GM12878 (cell line): ENCODE measurements at regions of chr10 and their contacts with region 1.

Region 1: GRCh38 chr10:79249186-79250121 is 97.8 kb upstream of the PPIF start:
- DNase-seq: peak; percentile 74
- ATAC-seq: peak; percentile 54
- H3K4me3 ChIP-seq: peak overlapping the region; percentile 80
- H3K27ac ChIP-seq: peak overlapping the region; percentile 92
- H3K4me1 ChIP-seq: peaks cover 91% of the 10 kb centered on the region
- H3K27me3 ChIP-seq: no peaks in the 10 kb centered on the region
- CTCF ChIP-seq: no peak
- EP300 ChIP-seq: no peak
- POLR2A ChIP-seq: peak; percentile 62
- RAD21 ChIP-seq: no peak

Region 2: DNA sequence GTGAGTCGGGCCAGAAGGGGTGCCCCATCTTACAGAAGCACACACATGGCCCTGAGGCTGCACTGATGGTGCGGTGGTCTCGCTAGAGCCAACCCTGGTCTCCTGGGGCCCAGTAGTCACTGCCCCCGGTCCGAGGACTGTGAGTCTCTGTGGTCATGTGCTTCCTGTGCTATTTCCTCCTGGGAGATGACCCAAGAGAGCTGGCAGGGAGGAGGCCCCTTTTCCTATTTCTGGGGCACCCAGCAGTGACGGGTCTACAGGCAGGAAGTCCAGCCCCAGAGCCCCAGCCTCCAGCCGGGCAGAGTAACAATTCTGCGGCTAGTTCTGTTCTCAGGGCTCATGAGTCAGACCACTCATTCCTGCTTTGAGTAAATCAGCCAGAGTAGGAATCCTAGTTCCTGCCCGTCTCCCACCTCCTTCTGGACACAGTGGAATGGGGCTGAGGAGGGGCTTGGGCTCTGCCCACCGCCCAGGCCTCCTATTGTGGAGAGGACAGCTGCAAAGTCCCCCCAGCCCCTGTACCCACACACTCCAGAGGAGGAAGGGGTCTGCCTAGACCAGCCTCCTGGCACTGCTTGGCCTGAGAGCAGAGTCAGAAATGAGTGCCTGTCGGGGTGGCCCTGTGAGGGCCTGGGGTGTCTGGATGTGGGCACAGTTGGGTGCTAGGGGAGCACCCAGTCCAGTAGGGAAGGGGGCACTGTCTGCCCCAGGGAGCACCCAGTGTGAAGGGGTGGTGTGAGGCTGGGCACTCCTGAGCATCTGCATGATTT is 17.3 kb after region 1 on chr10:
- CTCF ChIA-PET with region 1: interaction called, 42 read pairs
- POLR2A ChIA-PET with region 1: interaction called, 6 read pairs
- RAD21 ChIA-PET with region 1: interaction called, 48 read pairs
- SMC1A ChIA-PET with region 1: interaction called, 114 read pairs
- in situ Hi-C with region 1: no loop called
- intact Hi-C with region 1: loop called (anchors 1 kb)
- DNase-seq: peak; percentile 81
- ATAC-seq: peak; percentile 89
- H3K4me3 ChIP-seq: peak overlapping the region; percentile 19; the same call in 1 of the 2 replicates
- H3K27ac ChIP-seq: peak overlapping the region; percentile 91
- H3K4me1 ChIP-seq: peaks cover 65% of the 10 kb centered on the region
- H3K27me3 ChIP-seq: no peaks in the 10 kb centered on the region
- CTCF ChIP-seq: no peak
- EP300 ChIP-seq: peak; percentile 62 to 91; a peak in 3 of 4 replicates
- POLR2A ChIP-seq: no peak
- RAD21 ChIP-seq: no peak

Region 3: GRCh38 chr10:79305988-79306387 is 56.5 kb after region 1 on chr10:
- CTCF ChIA-PET with region 1: no interaction called
- POLR2A ChIA-PET with region 1: no interaction called
- RAD21 ChIA-PET with region 1: no interaction called
- SMC1A ChIA-PET with region 1: no interaction called
- in situ Hi-C with region 1: no loop called
- intact Hi-C with region 1: no loop called
- DNase-seq: no peak
- ATAC-seq: no peak
- H3K4me3 ChIP-seq: no peak overlapping the region
- H3K27ac ChIP-seq: no peak overlapping the region
- H3K4me1 ChIP-seq: no peaks in the 10 kb centered on the region
- H3K27me3 ChIP-seq: no peaks in the 10 kb centered on the region
- CTCF ChIP-seq: no peak
- EP300 ChIP-seq: no peak
- POLR2A ChIP-seq: 0 out of 2 replicates have a peak, but pooled peaks have one; percentile 10
- RAD21 ChIP-seq: no peak

Region 4: GRCh38 chr10:79316671-79317431 is 67.4 kb after region 1 on chr10:
- CTCF ChIA-PET with region 1: interaction called, 18 read pairs
- POLR2A ChIA-PET with region 1: interaction called, 9 read pairs
- RAD21 ChIA-PET with region 1: interaction called, 9 read pairs
- SMC1A ChIA-PET with region 1: interaction called, 9 read pairs
- in situ Hi-C with region 1: no loop called
- intact Hi-C with region 1: loop called (anchors 2 kb)
- DNase-seq: peak; percentile 56
- ATAC-seq: peak; percentile 82
- H3K4me3 ChIP-seq: peak overlapping the region; percentile 37; the same call in 1 of the 2 replicates
- H3K27ac ChIP-seq: peak overlapping the region; percentile 62
- H3K4me1 ChIP-seq: peaks cover 33% of the 10 kb centered on the region
- H3K27me3 ChIP-seq: no peaks in the 10 kb centered on the region
- CTCF ChIP-seq: peak; percentile 12 to 35 (median 28); a peak in 4 of 6 replicates
- EP300 ChIP-seq: peak in 1 of 2 experiments; percentile 50; a peak in 1 of 4 replicates
- POLR2A ChIP-seq: peak; percentile 56; the same call in 1 of the 2 replicates
- RAD21 ChIP-seq: 0 out of 2 replicates have a peak, but pooled peaks have one; percentile 6